Activated naive CD4-positive, alpha-beta T cell treated with anti-CD3 and anti-CD28 coated beads for 36 hours (primary cell): ENCODE measurements at regions of chr18 and their contacts with region 1.

Region 1: GRCh38 chr18:3593904-3594661 is 144.1 kb downstream of the TGIF1 start:
- DNase-seq: peak; percentile 95
- H3K4me3 Mint-ChIP-seq: peak overlapping the region; percentile 92
- H3K27ac Mint-ChIP-seq: peak overlapping the region; percentile 100
- H3K4me1 Mint-ChIP-seq: peaks cover 48% of the 10 kb centered on the region
- H3K27me3 Mint-ChIP-seq: no peaks in the 10 kb centered on the region

Region 2: GRCh38 chr18:2655178-2655953 is 938.7 kb before region 1 on chr18 and contains the start of gene SMCHD1:
- CTCF ChIA-PET with region 1: no interaction called
- intact Hi-C with region 1: loop called (anchors 10 kb)
- DNase-seq: peak; percentile 93
- H3K4me3 Mint-ChIP-seq: peak within 1 kb of the TSS; percentile 93
- H3K27ac Mint-ChIP-seq: peak within 1 kb of the TSS; percentile 96
- H3K4me1 Mint-ChIP-seq: peaks cover 34% of the 10 kb centered on the region
- H3K27me3 Mint-ChIP-seq: no peaks in the 10 kb centered on the region
- total RNA-seq, gene SMCHD1: 91.3 to 91.5 TPM

Region 3: DNA sequence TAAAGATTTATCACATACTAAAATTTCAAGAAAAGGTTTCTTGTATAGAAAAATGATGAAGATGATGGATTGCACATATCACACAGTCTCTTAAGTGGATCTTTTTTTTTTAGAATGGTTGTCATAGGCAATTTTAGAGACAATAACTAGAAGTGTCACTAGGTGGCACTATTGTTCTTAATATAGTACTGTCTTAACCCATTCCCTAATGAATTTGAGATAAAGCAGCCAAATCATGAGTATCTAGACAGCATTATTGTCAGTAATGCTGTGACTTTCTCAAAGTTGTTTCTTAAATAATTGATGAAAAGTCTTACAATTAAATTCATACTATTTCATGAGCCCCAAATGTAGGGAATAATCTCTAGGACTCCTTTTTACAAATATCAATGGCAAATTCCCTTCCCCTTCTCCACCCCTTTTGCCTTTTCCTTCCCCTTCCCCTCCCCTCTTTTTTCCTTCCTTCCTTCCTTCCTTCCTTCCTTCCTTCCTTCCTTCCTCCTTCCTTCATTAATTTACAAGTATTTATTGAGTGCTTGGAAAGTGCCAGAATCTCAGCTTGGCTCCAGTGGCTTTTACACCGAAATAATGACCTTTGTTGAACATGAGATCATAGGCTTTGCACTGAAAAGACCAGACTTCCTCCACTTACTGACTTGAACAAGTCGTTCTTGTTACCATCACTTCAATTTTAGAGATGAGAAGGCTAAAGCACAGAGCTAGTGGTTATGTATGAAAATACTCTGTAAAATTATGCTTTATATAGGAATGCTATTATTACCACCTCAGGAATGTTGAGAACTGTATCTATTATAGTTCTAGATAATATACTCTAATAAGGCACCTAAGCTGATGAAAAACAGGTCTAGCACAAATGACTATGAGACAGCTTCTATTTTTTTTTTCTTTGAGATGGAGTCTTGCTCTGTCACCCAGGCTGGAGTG is 312.4 kb before region 1 on chr18:
- CTCF ChIA-PET with region 1: interaction called, 11 read pairs
- intact Hi-C with region 1: loop called (anchors 1 kb)
- DNase-seq: no peak
- H3K4me3 Mint-ChIP-seq: no peak overlapping the region
- H3K27ac Mint-ChIP-seq: no peak overlapping the region
- H3K4me1 Mint-ChIP-seq: peaks cover 6% of the 10 kb centered on the region
- H3K27me3 Mint-ChIP-seq: no peaks in the 10 kb centered on the region

Region 4: DNA sequence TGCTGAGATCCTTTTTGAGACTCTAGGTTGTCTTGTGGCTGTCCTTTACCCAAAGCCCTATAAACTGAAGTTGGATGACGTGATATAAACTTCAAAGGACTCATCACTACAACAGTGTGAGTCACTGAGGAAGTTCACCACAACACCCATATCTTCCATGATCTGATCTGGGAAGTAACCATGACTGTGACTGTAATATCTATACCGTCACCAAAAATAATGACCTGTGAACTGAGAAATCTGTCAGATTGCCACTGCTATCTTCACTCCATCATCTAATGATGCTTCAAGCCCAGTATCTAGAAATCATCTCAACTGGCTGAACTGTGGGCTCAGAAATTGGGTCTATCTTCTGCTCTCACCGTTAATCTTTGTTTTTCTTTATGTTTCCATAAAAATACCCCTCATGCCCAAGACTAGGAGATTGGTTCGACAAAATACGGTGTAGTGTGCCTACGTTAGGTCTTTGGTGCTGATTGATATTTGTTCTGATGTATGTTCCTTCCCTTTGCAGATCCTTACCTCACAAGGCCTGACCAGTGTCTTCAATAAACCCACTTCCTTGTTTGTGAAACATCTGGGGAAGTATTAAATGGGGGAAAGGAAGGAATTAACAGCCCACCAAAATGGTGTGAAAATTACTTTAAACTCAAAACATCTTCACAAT is 253.9 kb before region 1 on chr18:
- CTCF ChIA-PET with region 1: no interaction called
- intact Hi-C with region 1: loop called (anchors 5 kb)
- DNase-seq: peak; percentile 26
- H3K4me3 Mint-ChIP-seq: no peak overlapping the region
- H3K27ac Mint-ChIP-seq: peak overlapping the region; percentile 62
- H3K4me1 Mint-ChIP-seq: peaks cover 25% of the 10 kb centered on the region
- H3K27me3 Mint-ChIP-seq: no peaks in the 10 kb centered on the region

Region 5: DNA sequence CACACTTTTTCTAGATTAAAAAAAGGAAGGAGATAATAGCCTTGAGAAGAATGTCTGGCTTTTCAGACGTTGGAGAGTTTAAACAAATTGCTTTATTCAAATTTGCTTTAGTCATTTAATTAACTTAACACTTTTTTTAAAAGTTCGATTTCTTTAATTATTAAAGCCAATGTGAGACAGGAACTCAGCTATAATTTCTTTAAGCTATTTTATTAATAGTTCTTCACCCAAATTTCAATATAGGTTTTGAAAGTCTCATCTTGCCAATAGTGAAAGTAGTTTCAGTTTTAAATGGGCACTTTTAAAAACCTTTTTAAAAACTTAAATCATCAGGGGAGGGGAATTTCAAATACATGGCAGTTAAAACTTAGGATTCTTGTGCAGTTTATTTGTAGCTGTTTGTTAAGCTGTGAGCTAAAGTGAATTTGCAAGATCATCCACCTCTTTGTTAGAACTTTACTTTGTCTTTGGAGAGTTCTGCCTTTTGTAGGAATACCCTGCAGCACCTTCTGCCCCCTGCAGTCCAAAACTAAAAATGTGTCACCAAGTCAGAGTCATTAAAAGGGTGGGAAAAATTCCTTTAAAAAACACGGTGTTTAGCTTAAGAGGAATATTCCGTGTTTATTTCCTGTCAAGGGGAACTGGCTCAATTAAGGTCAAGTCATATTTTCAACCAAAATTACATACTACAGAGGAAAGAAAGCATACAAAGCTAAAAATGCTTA is 139.6 kb before region 1 on chr18:
- CTCF ChIA-PET with region 1: interaction called, 42 read pairs
- intact Hi-C with region 1: loop called (anchors 1 kb)
- DNase-seq: peak; percentile 31
- H3K4me3 Mint-ChIP-seq: peak overlapping the region; percentile 89
- H3K27ac Mint-ChIP-seq: peak overlapping the region; percentile 99
- H3K4me1 Mint-ChIP-seq: peaks cover 63% of the 10 kb centered on the region
- H3K27me3 Mint-ChIP-seq: no peaks in the 10 kb centered on the region

Region 6: GRCh38 chr18:3623769-3624545 is 29.9 kb after region 1 on chr18:
- CTCF ChIA-PET with region 1: interaction called, 4 read pairs
- intact Hi-C with region 1: loop called (anchors 1 kb)
- DNase-seq: peak; percentile 44
- H3K4me3 Mint-ChIP-seq: peak overlapping the region; percentile 28
- H3K27ac Mint-ChIP-seq: peak overlapping the region; percentile 86
- H3K4me1 Mint-ChIP-seq: peaks cover 32% of the 10 kb centered on the region
- H3K27me3 Mint-ChIP-seq: no peaks in the 10 kb centered on the region

Region 7: DNA sequence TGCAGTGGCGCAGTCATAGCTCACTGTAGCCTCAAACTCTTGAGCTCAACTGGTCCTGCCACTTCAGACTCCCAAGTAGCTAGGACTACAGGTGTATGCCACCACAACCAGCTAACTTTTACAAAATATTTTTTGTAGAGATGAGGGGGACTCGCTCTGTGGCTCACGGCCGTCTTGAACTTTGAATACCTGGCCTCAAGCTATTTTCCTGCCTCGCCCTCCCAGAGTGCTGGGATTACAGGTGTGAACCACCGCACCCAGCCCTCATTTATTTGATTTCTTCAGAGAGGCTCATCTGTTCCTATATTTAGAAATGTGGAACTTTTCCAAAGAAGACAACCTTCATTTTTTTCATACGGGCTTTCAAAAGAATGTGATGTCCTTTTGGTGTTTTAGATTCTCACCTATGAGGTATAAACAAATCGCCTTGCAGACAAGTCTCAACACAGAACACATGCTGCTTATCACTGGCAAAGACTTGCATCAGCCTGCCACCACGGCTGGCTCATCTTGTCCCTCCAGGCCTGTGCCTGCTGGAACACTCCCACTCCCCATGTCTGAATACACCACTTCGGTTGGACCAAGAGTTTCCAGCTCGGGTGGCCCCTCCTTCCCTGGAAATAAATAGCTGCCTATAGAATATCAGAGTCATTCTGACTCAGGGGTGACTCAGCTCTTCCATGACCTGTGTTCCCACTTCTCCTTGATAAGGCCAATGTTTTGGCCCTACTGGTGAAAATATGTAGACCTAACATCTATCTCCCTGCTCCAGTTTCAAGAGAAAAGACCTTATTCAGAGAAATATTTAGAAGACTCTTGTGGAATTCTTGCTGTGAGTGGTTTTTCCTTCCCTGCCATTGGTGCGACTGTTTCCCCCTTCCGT is 58.5 kb after region 1 on chr18:
- CTCF ChIA-PET with region 1: interaction called, 6 read pairs
- intact Hi-C with region 1: loop called (anchors 2 kb)
- DNase-seq: peak; percentile 84
- H3K4me3 Mint-ChIP-seq: no peak overlapping the region
- H3K27ac Mint-ChIP-seq: peak overlapping the region; percentile 84
- H3K4me1 Mint-ChIP-seq: peaks cover 27% of the 10 kb centered on the region
- H3K27me3 Mint-ChIP-seq: no peaks in the 10 kb centered on the region